Endothelial cell of umbilical vein (primary cell): ENCODE measurements at regions of chr1 and their contacts with region 1.

Region 1: GRCh38 chr1:172588296-172589291 is 55.6 kb downstream of the SUCO start:
- DNase-seq: peak; percentile 90
- H3K4me3 ChIP-seq: peak overlapping the region in 2 of 3 experiments; percentile 30 to 58
- H3K27ac ChIP-seq: peak overlapping the region; percentile 83
- H3K4me1 ChIP-seq: peaks cover 43% of the 10 kb centered on the region
- H3K27me3 ChIP-seq: no peaks in the 10 kb centered on the region
- CTCF ChIP-seq: no peak
- POLR2A ChIP-seq: peak; percentile 25

Region 2: GRCh38 chr1:172449585-172450534 is 138.7 kb before region 1 on chr1:
- CTCF ChIA-PET with region 1: interaction called, 3 read pairs
- POLR2A ChIA-PET with region 1: no interaction called
- dilution Hi-C with region 1: no loop called
- intact Hi-C with region 1: loop called (anchors 5 kb)
- DNase-seq: peak; percentile 61
- H3K4me3 ChIP-seq: no peak overlapping the region
- H3K27ac ChIP-seq: no peak overlapping the region
- H3K4me1 ChIP-seq: peaks cover 22% of the 10 kb centered on the region
- H3K27me3 ChIP-seq: no peaks in the 10 kb centered on the region
- CTCF ChIP-seq: peak; percentile 67 to 86
- POLR2A ChIP-seq: no peak

Region 3: GRCh38 chr1:172578586-172578985 is 10.0 kb before region 1 on chr1:
- CTCF ChIA-PET with region 1: no interaction called
- POLR2A ChIA-PET with region 1: no interaction called
- dilution Hi-C with region 1: no loop called
- intact Hi-C with region 1: no loop called
- DNase-seq: no peak
- H3K4me3 ChIP-seq: no peak overlapping the region
- H3K27ac ChIP-seq: no peak overlapping the region
- H3K4me1 ChIP-seq: peaks cover 14% of the 10 kb centered on the region
- H3K27me3 ChIP-seq: no peaks in the 10 kb centered on the region
- CTCF ChIP-seq: no peak
- POLR2A ChIP-seq: no peak

Region 4: GRCh38 chr1:172602706-172603105 is 14.1 kb after region 1 on chr1:
- CTCF ChIA-PET with region 1: no interaction called
- POLR2A ChIA-PET with region 1: no interaction called
- dilution Hi-C with region 1: no loop called
- intact Hi-C with region 1: no loop called
- DNase-seq: no peak
- H3K4me3 ChIP-seq: no peak overlapping the region
- H3K27ac ChIP-seq: no peak overlapping the region
- H3K4me1 ChIP-seq: no peaks in the 10 kb centered on the region
- H3K27me3 ChIP-seq: no peaks in the 10 kb centered on the region
- CTCF ChIP-seq: no peak
- POLR2A ChIP-seq: no peak

Region 5: DNA sequence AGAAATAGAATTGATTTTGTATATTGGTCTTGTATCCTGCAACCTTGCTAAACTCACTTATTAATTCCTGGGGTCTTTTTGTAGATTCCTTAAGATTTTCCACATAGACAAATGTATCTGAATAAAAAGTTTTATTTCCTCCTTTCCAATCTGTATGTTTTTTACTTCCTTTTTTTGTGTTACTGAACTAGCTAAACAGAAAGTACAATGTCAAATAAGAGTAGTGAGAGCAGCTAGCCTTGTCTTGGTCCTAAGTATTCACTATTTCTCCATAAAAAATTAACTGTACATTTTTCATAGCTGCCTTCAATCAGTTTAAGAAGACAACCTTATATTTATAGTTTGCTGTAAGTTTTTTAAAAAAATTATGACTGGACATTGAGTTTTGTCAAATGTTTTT is 145.2 kb after region 1 on chr1:
- CTCF ChIA-PET with region 1: no interaction called
- POLR2A ChIA-PET with region 1: no interaction called
- dilution Hi-C with region 1: no loop called
- intact Hi-C with region 1: no loop called
- DNase-seq: no peak
- H3K4me3 ChIP-seq: no peak overlapping the region
- H3K27ac ChIP-seq: no peak overlapping the region
- H3K4me1 ChIP-seq: no peaks in the 10 kb centered on the region
- H3K27me3 ChIP-seq: no peaks in the 10 kb centered on the region
- CTCF ChIP-seq: no peak
- POLR2A ChIP-seq: no peak